Kidney (tissue), 22 donors: ENCODE measurements at regions of chr12 and their contacts with region 1.

Region 1: GRCh38 chr12:10771132-10771733 is 31.2 kb downstream of the TAS2R7 start:
- DNase-seq: peak in 2 of 5 donors; percentile 21 to 55
- H3K4me3 ChIP-seq: no peak overlapping the region
- H3K27ac ChIP-seq: no peak overlapping the region
- H3K4me1 ChIP-seq: no peaks in the 10 kb centered on the region
- H3K27me3 ChIP-seq: no peaks in the 10 kb centered on the region
- CTCF ChIP-seq: peak; percentile 45

Region 2: DNA sequence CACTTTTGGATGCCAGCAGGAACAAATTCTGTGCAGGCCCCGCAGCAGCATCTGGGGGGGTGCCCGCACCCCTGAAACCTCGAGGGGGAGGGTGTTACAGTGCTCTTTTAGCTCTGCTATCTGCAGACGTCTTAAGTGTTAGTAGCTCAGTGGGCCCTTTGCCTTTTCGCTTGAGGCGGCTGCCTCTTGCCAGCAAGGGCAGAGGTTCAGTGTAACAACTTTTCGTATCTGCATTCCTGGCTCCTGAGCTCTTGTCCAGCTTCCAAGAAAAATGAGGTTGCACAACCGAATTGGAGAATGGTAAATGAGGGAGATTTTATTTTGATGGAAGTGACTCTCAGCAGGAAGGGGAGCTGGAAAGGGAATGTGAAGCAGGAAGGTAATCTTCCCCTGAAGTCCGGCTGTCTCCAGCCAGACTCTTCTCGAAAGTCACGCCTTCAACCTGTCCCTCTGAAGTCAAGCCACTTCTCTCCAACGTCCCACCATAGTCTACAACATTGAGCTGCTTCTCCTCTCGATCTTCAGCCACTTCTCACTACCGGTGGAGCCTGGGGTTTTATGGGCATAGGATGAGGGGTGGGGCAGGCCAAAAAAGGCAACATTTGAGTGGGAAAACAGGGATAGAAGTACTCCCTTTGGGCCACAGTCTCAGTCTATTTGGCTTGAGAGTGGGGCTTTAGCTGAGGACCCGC is 197.7 kb after region 1 on chr12:
- intact Hi-C with region 1: no loop called
- DNase-seq: peak in 2 of 5 donors; percentile 40 to 65
- H3K4me3 ChIP-seq: no peak overlapping the region
- H3K27ac ChIP-seq: no peak overlapping the region
- H3K4me1 ChIP-seq: peaks cover 0 to 2% (median 0%) of the 10 kb centered on the region in 3 donors
- H3K27me3 ChIP-seq: no peaks in the 10 kb centered on the region
- CTCF ChIP-seq: no peak

Region 3: DNA sequence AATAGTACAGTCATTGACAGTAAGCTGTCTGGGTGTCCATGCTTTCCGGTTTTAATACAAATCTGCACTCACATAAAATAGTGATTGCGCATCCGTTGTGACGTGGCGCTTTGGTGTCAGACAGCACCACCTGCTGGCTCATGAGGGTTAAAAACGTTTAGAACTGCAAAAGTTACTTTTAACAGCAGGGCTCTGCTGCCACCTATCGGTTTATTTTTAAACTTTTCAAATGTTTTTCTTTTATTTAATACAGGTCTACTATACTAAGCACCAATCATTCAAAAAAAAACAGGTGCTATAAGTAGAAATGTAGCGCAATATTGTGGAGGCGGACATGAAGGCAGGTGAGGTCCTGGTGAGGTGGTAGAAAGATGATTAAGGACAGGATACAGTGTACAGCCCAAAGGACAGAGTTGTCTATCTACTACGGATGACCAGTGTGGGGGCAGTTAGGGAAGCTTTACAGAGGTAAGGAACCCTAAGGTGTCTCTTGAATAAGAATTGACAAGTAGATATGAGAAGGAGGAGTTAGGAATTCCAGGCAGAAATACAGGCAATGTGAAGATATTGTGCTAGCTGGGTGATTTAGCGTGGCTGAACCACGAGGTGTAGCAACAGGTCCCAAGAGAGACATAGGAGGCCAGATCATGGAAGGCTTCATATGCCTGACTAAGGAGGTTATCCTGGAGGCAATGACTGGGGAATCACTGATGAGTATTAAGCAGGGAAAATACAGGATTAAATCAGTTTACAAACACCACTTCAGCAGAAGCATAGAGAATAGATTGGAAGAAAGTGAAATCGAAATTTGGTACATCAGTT is 715.6 kb after region 1 on chr12:
- intact Hi-C with region 1: loop called (anchors 10 kb)
- DNase-seq: peak; percentile 76 to 93 (median 82)
- H3K4me3 ChIP-seq: peak overlapping the region in 2 of 3 donors; percentile 19 to 33
- H3K27ac ChIP-seq: no peak overlapping the region
- H3K4me1 ChIP-seq: no peaks in the 10 kb centered on the region
- H3K27me3 ChIP-seq: no peaks in the 10 kb centered on the region
- CTCF ChIP-seq: peak; percentile 96